ENCODE measurements at regions of chr11 and their contacts with region 1.

Region 1: GRCh38 chr11:118171269-118172062 is 5.0 kb downstream of the SCN2B start:
- DNase-seq: no peak
- ATAC-seq: peak; percentile 91
- H3K4me3 ChIP-seq: no peak overlapping the region
- H3K27ac ChIP-seq: no peak overlapping the region
- H3K4me1 ChIP-seq: no peaks in the 10 kb centered on the region
- H3K27me3 ChIP-seq: peaks cover 0 to 3% of the 10 kb centered on the region in 2 experiments; a peak in 2 of 4 replicates
- CTCF ChIP-seq: peak; percentile 86 to 93 (median 88)
- EP300 ChIP-seq: no peak
- POLR2A ChIP-seq: no peak
- RAD21 ChIP-seq: peak; percentile 66

Region 2: DNA sequence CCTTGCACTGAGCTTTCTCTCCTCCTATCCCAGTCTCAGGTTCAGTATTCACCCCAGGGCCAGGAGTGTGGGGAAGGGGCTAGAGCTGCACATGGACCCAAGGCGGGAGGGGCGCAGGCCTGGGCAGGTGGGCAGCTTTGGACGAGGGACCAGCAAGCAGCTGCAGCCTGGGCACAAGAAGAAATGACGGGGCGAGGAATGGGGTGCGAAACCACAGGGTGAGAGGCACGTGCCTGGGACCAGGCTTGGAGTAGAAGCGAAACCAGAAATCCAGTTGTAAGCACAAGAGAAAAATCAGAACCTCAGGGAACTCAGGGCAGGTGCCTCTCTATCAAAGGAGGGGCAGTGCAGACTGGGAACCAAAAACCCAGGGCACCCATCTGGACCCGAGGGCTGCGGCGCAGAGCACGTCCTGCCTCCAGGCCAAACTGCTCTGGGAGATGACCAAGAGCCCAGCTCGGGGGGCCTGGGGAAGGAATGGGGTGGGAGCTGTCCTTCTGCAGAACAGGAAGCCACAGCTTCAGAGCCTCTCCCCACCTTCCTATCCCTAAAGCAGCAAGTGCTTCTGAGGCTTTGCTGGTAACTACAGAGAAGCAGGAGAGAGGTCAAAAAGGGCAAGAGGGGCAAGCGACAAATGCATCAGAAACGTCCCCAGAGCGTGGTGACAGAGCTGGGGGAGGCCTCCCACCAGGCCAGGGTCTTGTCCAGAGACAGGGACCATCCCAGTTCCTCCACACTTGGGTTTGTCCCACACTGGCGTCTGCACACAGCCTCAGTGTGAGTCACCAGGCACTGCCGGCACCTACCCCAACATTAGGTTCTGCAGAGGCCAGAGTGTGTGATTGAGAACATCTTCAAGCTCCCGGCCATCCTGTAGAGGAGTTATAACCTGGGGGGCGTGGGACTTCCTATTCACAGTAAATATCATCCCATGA is 112.9 kb before region 1 on chr11:
- CTCF ChIA-PET with region 1: interaction called, 20 read pairs
- POLR2A ChIA-PET with region 1: no interaction called
- RAD21 ChIA-PET with region 1: interaction called, 4 read pairs
- SMC1A ChIA-PET with region 1: interaction called, 3 read pairs
- in situ Hi-C with region 1: no loop called
- intact Hi-C with region 1: no loop called
- DNase-seq: no peak
- ATAC-seq: peak; percentile 31; the same call in 1 of the 3 replicates
- H3K4me3 ChIP-seq: no peak overlapping the region
- H3K27ac ChIP-seq: no peak overlapping the region
- H3K4me1 ChIP-seq: no peaks in the 10 kb centered on the region
- H3K27me3 ChIP-seq: peaks cover 1 to 3% of the 10 kb centered on the region in 2 experiments; a peak in 3 of 4 replicates
- CTCF ChIP-seq: no peak
- EP300 ChIP-seq: no peak
- POLR2A ChIP-seq: no peak
- RAD21 ChIP-seq: no peak

Region 3: GRCh38 chr11:118139578-118139977 is 31.9 kb before region 1 on chr11:
- CTCF ChIA-PET with region 1: interaction called, 85 read pairs
- POLR2A ChIA-PET with region 1: no interaction called
- RAD21 ChIA-PET with region 1: interaction called, 52 read pairs
- SMC1A ChIA-PET with region 1: interaction called, 49 read pairs
- in situ Hi-C with region 1: no loop called
- intact Hi-C with region 1: no loop called
- DNase-seq: no peak
- ATAC-seq: no peak
- H3K4me3 ChIP-seq: no peak overlapping the region
- H3K27ac ChIP-seq: no peak overlapping the region
- H3K4me1 ChIP-seq: no peaks in the 10 kb centered on the region
- H3K27me3 ChIP-seq: peaks cover 6 to 9% of the 10 kb centered on the region in 2 experiments
- CTCF ChIP-seq: no peak
- EP300 ChIP-seq: no peak
- POLR2A ChIP-seq: no peak
- RAD21 ChIP-seq: no peak

Region 4: GRCh38 chr11:118156531-118157185 is 14.8 kb before region 1 on chr11:
- CTCF ChIA-PET with region 1: interaction called, 37 read pairs
- POLR2A ChIA-PET with region 1: no interaction called
- RAD21 ChIA-PET with region 1: interaction called, 3 read pairs
- SMC1A ChIA-PET with region 1: interaction called, 4 read pairs
- in situ Hi-C with region 1: no loop called
- intact Hi-C with region 1: no loop called
- DNase-seq: no peak
- ATAC-seq: peak; percentile 44; the same call in 2 of the 3 replicates
- H3K4me3 ChIP-seq: no peak overlapping the region
- H3K27ac ChIP-seq: no peak overlapping the region
- H3K4me1 ChIP-seq: no peaks in the 10 kb centered on the region
- H3K27me3 ChIP-seq: peaks cover 26 to 29% of the 10 kb centered on the region in 2 experiments
- CTCF ChIP-seq: no peak
- EP300 ChIP-seq: no peak
- POLR2A ChIP-seq: no peak
- RAD21 ChIP-seq: no peak

Region 5: GRCh38 chr11:118552341-118552740 is 380.9 kb after region 1 on chr11:
- CTCF ChIA-PET with region 1: no interaction called
- POLR2A ChIA-PET with region 1: no interaction called
- RAD21 ChIA-PET with region 1: no interaction called
- SMC1A ChIA-PET with region 1: no interaction called
- in situ Hi-C with region 1: no loop called
- intact Hi-C with region 1: no loop called
- DNase-seq: no peak
- ATAC-seq: no peak
- H3K4me3 ChIP-seq: no peak overlapping the region
- H3K27ac ChIP-seq: no peak overlapping the region
- H3K4me1 ChIP-seq: no peaks in the 10 kb centered on the region
- H3K27me3 ChIP-seq: no peaks in the 10 kb centered on the region
- CTCF ChIP-seq: no peak
- EP300 ChIP-seq: no peak
- POLR2A ChIP-seq: no peak
- RAD21 ChIP-seq: no peak